Activated naive CD8-positive, alpha-beta T cell treated with anti-CD3 and anti-CD28 coated beads, Interleukin-2, amount 10 ng/mL, durations not matched to agents 7 days and 5 days (primary cell): ENCODE measurements at regions of chr17 and their contacts with region 1.

Region 1: DNA sequence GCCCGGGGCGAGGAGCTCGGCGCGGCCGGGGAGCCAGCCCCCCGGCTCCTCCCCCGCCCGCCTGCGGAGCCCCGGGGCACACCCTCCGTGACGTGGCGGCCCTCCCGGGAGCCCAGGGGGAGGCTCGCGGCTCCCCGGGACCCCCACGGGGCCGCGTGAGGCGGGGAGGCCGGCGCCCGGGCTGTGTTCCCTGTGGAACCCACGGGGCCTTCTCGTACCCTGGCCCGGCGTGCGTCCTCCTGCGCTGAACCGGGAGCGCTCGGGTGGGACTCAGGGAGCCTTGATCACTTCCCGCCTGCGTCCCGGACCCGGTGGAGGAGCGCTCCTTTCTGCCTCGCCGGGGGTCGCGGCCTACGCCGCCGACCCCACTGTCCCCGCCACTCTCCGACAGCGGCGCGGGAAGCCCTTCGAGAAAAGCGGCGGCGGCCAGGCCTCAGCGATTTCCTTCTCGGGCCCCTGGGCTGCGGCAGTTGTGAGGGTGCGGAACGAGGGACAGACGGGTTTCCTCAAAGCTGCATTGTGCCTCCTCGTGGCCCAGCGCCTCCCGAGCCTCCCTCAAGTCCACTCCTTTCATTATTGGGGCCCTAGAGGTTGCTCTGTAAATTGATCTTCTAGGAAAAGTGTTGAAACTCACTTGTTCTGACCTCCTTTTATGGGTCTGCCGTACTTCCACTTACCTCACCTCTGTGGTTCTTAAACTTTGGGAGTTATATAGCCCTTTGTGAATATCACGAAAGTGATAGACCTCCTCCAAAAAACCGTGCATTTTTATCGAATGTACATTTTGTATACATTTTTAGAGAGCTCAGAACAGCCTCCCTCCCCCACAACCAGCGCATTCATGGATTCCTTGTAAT is 597 bp downstream of the LIG3 start:
- DNase-seq: peak; percentile 91
- ATAC-seq: peak; percentile 88
- H3K4me3 Mint-ChIP-seq: peak overlapping the region; percentile 86
- H3K27ac Mint-ChIP-seq: peak overlapping the region; percentile 88
- H3K4me1 Mint-ChIP-seq: peaks cover 31% of the 10 kb centered on the region
- H3K27me3 Mint-ChIP-seq: no peaks in the 10 kb centered on the region

Region 2: GRCh38 chr17:34917381-34917780 is 63.5 kb before region 1 on chr17:
- POLR2A ChIA-PET with region 1: no interaction called
- DNase-seq: no peak
- ATAC-seq: no peak
- H3K4me3 Mint-ChIP-seq: no peak overlapping the region
- H3K27ac Mint-ChIP-seq: no peak overlapping the region
- H3K4me1 Mint-ChIP-seq: no peaks in the 10 kb centered on the region
- H3K27me3 Mint-ChIP-seq: peaks cover 3% of the 10 kb centered on the region

Region 3: GRCh38 chr17:34961093-34961911 is 19.6 kb before region 1 on chr17 and contains the starts of genes CCT6B and ZNF830:
- POLR2A ChIA-PET with region 1: interaction called, 22 read pairs
- DNase-seq: peak; percentile 87
- ATAC-seq: peak; percentile 92
- H3K4me3 Mint-ChIP-seq: peak within 1 kb of the TSS; percentile 100
- H3K27ac Mint-ChIP-seq: peak within 1 kb of the TSS; percentile 100
- H3K4me1 Mint-ChIP-seq: peaks cover 20% of the 10 kb centered on the region
- H3K27me3 Mint-ChIP-seq: peaks cover 4% of the 10 kb centered on the region
- total RNA-seq, gene CCT6B: 1.4 to 1.5 TPM
- total RNA-seq, gene ZNF830: 29.5 to 33.4 TPM

Region 4: DNA sequence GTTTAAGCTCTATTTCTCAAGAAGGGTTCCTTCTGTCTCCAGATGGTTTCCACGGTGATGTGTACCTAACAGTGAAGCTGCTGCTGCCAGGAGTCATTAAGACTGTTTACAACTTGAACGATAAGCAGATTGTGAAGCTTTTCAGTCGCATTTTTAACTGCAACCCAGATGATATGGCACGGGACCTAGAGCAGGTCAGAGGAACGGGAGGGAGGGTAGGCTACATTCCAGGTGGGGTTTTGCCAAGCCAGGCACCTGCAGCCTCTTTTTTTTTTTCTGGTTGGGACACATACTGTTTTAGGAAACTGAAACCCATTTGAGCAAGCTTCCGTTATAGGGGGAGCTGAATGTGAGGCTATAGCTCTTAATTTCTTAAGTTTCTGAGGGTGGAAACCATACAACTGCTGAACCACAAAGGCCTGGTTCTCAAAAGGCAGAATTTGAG is 10.0 kb after region 1 on chr17:
- POLR2A ChIA-PET with region 1: interaction called, 23 read pairs
- DNase-seq: no peak
- ATAC-seq: no peak
- H3K4me3 Mint-ChIP-seq: no peak overlapping the region
- H3K27ac Mint-ChIP-seq: peak overlapping the region; percentile 26
- H3K4me1 Mint-ChIP-seq: peaks cover 17% of the 10 kb centered on the region
- H3K27me3 Mint-ChIP-seq: no peaks in the 10 kb centered on the region

Region 5: GRCh38 chr17:35002876-35003518 is 22.1 kb after region 1 on chr17:
- POLR2A ChIA-PET with region 1: no interaction called
- DNase-seq: no peak
- ATAC-seq: no peak
- H3K4me3 Mint-ChIP-seq: no peak overlapping the region
- H3K27ac Mint-ChIP-seq: no peak overlapping the region
- H3K4me1 Mint-ChIP-seq: peaks cover 4% of the 10 kb centered on the region
- H3K27me3 Mint-ChIP-seq: no peaks in the 10 kb centered on the region

Region 6: GRCh38 chr17:35119368-35120165 is 138.7 kb after region 1 on chr17 and contains the start of gene RAD51D:
- POLR2A ChIA-PET with region 1: interaction called, 10 read pairs
- DNase-seq: peak; percentile 93
- ATAC-seq: peak; percentile 86
- H3K4me3 Mint-ChIP-seq: peak within 1 kb of the TSS; percentile 96
- H3K27ac Mint-ChIP-seq: peak within 1 kb of the TSS; percentile 96
- H3K4me1 Mint-ChIP-seq: peaks cover 30% of the 10 kb centered on the region
- H3K27me3 Mint-ChIP-seq: no peaks in the 10 kb centered on the region
- total RNA-seq, gene RAD51D: 27.3 to 33.8 TPM